ENCODE measurements at regions of chr11 and their contacts with region 1.

Region 1: DNA sequence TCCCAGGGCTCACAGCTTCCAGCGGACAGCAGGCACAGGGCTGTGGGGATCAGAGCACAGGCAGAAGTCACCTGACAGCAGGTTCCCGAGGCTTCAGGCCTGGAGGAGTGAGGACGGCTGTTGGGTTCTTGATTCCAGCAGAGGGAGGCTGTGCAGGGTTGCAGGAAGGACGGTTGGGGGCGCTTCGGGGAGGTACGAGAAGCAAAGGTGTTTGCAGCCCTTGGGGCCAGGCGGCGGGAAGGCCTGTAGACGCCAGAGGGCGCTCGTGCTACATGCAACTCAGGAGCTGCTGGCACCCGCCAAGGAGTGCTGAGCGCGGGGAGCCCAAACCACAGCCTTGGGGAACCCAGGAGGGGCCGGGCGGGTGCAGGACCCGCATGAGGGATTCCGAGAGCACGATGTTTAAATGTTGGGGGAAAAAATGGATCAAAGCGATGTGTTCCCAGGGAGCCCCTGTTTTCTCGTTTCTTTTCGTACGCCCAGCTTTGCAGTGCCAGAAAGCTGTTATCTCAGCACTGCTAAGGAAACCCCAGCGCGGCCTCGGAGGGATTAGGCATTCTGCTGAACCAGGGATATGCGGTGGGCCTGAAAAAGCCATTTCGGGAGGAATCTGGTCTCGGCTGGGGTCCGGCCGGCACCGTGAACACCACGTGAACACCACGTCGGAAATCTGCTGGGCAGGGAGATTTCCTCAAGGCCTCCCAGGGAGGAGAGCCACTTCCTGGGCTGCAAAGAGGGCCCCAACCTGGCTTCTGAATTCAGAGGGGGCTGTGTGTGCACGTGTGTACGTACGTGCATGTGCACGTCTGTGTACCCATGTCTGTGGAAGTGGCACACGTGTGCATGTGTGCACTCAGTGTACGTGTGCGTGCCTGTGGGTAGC is 88.1 kb downstream of the KCNQ1 start:
- DNase-seq: peak; percentile 86 to 97 (median 92)
- ATAC-seq: peak; percentile 89
- H3K4me3 ChIP-seq: peak overlapping the region; percentile 33
- H3K4me3 Mint-ChIP-seq: peak overlapping the region; percentile 77
- H3K27ac ChIP-seq: no peak overlapping the region
- H3K27ac Mint-ChIP-seq: no peak overlapping the region
- H3K4me1 ChIP-seq: peaks cover 31% of the 10 kb centered on the region
- H3K4me1 Mint-ChIP-seq: peaks cover 25% of the 10 kb centered on the region
- H3K27me3 ChIP-seq: no peaks in the 10 kb centered on the region
- H3K27me3 Mint-ChIP-seq: no peaks in the 10 kb centered on the region
- CTCF ChIP-seq: peak; percentile 99

Region 2: DNA sequence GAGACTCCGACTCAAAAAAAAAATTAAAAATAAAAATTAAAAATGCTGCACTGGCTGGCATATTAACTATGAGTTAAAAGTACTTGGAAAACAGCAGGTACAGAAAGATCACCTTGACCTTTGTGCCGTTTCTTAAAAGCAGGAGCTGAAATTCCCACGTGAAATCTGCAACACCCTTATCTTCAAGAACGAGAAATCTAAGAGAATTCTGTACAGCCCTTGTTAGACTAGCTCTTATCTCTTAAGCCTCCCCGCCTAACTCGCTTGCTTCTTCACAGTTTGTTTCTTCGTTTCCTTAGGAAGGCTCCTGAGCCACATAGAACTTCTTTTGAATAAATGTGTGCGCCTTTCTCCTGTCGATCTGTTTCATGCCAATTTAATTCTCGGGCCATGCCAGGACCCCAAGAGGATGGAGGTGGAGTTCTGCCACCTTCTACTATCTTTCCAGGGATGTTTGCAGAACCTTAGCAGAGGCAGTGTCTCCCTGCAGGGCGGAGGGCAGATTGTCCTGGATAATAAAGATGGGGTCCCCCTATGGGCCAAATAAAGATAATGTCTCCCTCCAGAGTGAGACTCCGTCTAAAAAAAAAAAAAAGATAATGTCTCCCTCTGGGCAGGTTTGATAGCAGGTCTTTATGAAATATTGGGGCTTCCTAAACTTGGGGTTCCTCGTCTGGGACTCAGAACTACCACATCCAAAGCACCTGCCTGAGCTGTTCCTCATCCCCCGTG is 725.5 kb before region 1 on chr11:
- CTCF ChIA-PET with region 1: no interaction called
- POLR2A ChIA-PET with region 1: no interaction called
- intact Hi-C with region 1: no loop called
- DNase-seq: peak in 1 of 14 experiments; percentile 12
- ATAC-seq: no peak
- H3K4me3 ChIP-seq: no peak overlapping the region
- H3K4me3 Mint-ChIP-seq: no peak overlapping the region
- H3K27ac ChIP-seq: no peak overlapping the region
- H3K27ac Mint-ChIP-seq: no peak overlapping the region
- H3K4me1 ChIP-seq: no peaks in the 10 kb centered on the region
- H3K4me1 Mint-ChIP-seq: no peaks in the 10 kb centered on the region
- H3K27me3 ChIP-seq: peaks cover 0 to 4% of the 10 kb centered on the region in 2 experiments
- H3K27me3 Mint-ChIP-seq: peaks cover 24% of the 10 kb centered on the region
- CTCF ChIP-seq: no peak

Region 3: GRCh38 chr11:2420502-2421225 is 112.3 kb before region 1 on chr11:
- CTCF ChIA-PET with region 1: interaction called, 46 read pairs
- POLR2A ChIA-PET with region 1: no interaction called
- intact Hi-C with region 1: no loop called
- DNase-seq: peak; percentile 51 to 89 (median 68)
- ATAC-seq: peak; percentile 96
- H3K4me3 ChIP-seq: no peak overlapping the region
- H3K4me3 Mint-ChIP-seq: no peak overlapping the region
- H3K27ac ChIP-seq: no peak overlapping the region
- H3K27ac Mint-ChIP-seq: no peak overlapping the region
- H3K4me1 ChIP-seq: peaks cover 14% of the 10 kb centered on the region
- H3K4me1 Mint-ChIP-seq: no peaks in the 10 kb centered on the region
- H3K27me3 ChIP-seq: no peaks in the 10 kb centered on the region
- H3K27me3 Mint-ChIP-seq: no peaks in the 10 kb centered on the region
- CTCF ChIP-seq: peak; percentile 88

Region 4: DNA sequence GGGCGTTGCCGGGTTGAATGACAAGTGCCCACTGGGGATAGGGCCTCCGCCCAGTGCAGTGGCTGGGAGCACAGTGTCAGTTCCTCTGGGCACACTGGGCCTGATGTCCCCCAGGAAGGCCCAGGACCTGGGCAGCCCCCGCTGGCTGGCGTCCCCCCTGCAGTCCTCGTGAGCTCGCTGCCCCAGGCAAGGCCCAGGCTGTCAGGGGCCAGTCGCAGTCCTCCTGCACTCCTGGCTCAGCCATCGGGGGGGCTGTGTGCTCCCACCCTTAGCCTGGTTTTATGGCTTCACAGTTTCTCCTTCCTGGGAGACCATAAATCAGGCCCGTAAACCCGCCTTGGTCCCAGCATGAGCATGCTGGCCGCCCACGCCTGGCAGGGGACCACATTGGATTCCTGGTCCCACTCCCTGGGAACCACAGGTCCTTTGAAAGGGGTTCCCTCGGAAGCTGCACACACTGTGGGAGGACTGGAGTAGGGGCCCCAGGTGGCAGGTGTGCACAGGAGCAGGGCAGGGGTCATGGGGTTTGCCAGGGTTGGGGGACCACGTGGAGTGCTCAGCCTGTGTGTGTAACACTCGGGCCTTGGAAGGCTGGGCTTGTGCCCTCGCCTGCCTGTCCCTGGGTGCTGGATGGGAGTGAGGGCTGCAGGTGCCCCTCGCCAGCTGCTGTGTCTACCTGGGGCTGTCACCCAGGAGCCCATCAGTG is 53.3 kb after region 1 on chr11:
- CTCF ChIA-PET with region 1: no interaction called
- POLR2A ChIA-PET with region 1: no interaction called
- intact Hi-C with region 1: no loop called
- DNase-seq: peak in 1 of 14 experiments; percentile 26
- ATAC-seq: no peak
- H3K4me3 ChIP-seq: no peak overlapping the region
- H3K4me3 Mint-ChIP-seq: no peak overlapping the region
- H3K27ac ChIP-seq: no peak overlapping the region
- H3K27ac Mint-ChIP-seq: no peak overlapping the region
- H3K4me1 ChIP-seq: no peaks in the 10 kb centered on the region
- H3K4me1 Mint-ChIP-seq: no peaks in the 10 kb centered on the region
- H3K27me3 ChIP-seq: no peaks in the 10 kb centered on the region
- H3K27me3 Mint-ChIP-seq: no peaks in the 10 kb centered on the region
- CTCF ChIP-seq: no peak

Region 5: GRCh38 chr11:2885676-2886081 is 352.7 kb after region 1 on chr11 and contains the start of gene CDKN1C:
- CTCF ChIA-PET with region 1: interaction called, 158 read pairs
- POLR2A ChIA-PET with region 1: interaction called, 25 read pairs
- intact Hi-C with region 1: loop called (anchors 1 kb)
- DNase-seq: peak; percentile 68 to 95 (median 82)
- ATAC-seq: peak; percentile 87
- H3K4me3 ChIP-seq: peak within 1 kb of the TSS; percentile 84
- H3K4me3 Mint-ChIP-seq: peak within 1 kb of the TSS; percentile 96
- H3K27ac ChIP-seq: no peak within 1 kb of the TSS
- H3K27ac Mint-ChIP-seq: peak within 1 kb of the TSS; percentile 77
- H3K4me1 ChIP-seq: peaks cover 41% of the 10 kb centered on the region
- H3K4me1 Mint-ChIP-seq: peaks cover 19% of the 10 kb centered on the region
- H3K27me3 ChIP-seq: peaks cover 0 to 4% of the 10 kb centered on the region in 2 experiments
- H3K27me3 Mint-ChIP-seq: no peaks in the 10 kb centered on the region
- CTCF ChIP-seq: no peak
- total RNA-seq, gene CDKN1C: 1.9 to 2.5 TPM

Region 6: DNA sequence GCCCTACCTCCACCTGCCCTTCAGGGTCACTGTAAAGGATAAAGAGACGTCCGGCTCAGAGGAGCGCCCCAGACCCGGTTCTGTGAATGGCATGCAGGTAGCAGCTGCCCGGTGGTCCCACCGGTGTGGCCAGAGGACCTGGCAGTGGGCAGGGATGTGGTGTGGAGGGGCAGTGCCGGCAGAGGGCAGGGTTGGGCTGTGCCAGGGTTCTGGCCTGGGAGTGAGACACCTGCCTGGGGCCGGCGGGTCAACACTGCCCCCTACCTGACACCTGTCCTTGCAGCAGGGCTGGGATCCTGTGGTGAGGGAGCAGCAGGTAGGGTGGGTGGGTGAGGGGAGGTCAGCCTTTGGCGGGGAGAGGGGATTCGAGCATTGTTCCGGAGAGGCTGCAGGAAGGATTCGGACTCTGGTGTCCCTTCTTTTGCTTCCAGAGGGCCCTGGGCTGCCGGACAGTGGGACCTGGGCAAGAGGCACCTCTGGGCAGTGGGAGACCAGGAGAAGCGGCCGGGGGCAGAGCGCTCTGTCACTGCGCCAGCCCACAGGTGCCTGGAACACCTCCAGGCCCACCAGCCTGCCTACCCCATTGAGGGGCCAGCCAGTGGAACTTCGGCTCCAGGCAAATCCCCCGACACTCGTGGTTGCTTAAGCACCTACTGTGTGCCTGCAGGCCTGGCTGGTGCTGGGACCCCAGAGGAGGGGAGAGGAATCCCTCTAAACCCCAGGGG is 397.9 kb after region 1 on chr11:
- CTCF ChIA-PET with region 1: interaction called, 17 read pairs
- POLR2A ChIA-PET with region 1: no interaction called
- intact Hi-C with region 1: loop called in 1 of 2 experiments (anchors 1 kb)
- DNase-seq: peak in 11 of 14 experiments; percentile 24 to 70 (median 45)
- ATAC-seq: no peak
- H3K4me3 ChIP-seq: peak overlapping the region; percentile 55
- H3K4me3 Mint-ChIP-seq: peak overlapping the region; percentile 85
- H3K27ac ChIP-seq: no peak overlapping the region
- H3K27ac Mint-ChIP-seq: no peak overlapping the region
- H3K4me1 ChIP-seq: peaks cover 48% of the 10 kb centered on the region
- H3K4me1 Mint-ChIP-seq: peaks cover 24% of the 10 kb centered on the region
- H3K27me3 ChIP-seq: peaks cover 21 to 24% of the 10 kb centered on the region in 2 experiments
- H3K27me3 Mint-ChIP-seq: peaks cover 30% of the 10 kb centered on the region
- CTCF ChIP-seq: peak; percentile 56

Region 7: GRCh38 chr11:3217676-3218482 is 684.9 kb after region 1 on chr11:
- CTCF ChIA-PET with region 1: no interaction called
- POLR2A ChIA-PET with region 1: no interaction called
- intact Hi-C with region 1: loop called (anchors 2 kb)
- DNase-seq: peak in 1 of 14 experiments; percentile 28
- ATAC-seq: no peak
- H3K4me3 ChIP-seq: no peak overlapping the region
- H3K4me3 Mint-ChIP-seq: no peak overlapping the region
- H3K27ac ChIP-seq: no peak overlapping the region
- H3K27ac Mint-ChIP-seq: no peak overlapping the region
- H3K4me1 ChIP-seq: peaks cover 9% of the 10 kb centered on the region
- H3K4me1 Mint-ChIP-seq: peaks cover 4% of the 10 kb centered on the region
- H3K27me3 ChIP-seq: peaks cover 5 to 8% of the 10 kb centered on the region in 2 experiments
- H3K27me3 Mint-ChIP-seq: peaks cover 22% of the 10 kb centered on the region
- CTCF ChIP-seq: no peak

Measured in CD4-positive, alpha-beta T cell (primary cell).